Prostate gland (tissue), 2 donors: ENCODE measurements at regions of chr1 and their contacts with region 1.

Region 1: GRCh38 chr1:116570358-116571200 is at the start of gene CD58:
- DNase-seq: peak; percentile 85
- H3K4me3 ChIP-seq: peak within 1 kb of the TSS; percentile 63 to 97
- H3K27ac ChIP-seq: peak within 1 kb of the TSS; percentile 94 to 97
- H3K4me1 ChIP-seq: no peaks in the 10 kb centered on the region
- H3K27me3 ChIP-seq: no peaks in the 10 kb centered on the region
- CTCF ChIP-seq: peak in 3 of 4 experiments; percentile 39 to 73 (median 70)
- POLR2A ChIP-seq: peak; percentile 82
- total RNA-seq, gene CD58: 10.4 to 13.7 TPM

Region 2: GRCh38 chr1:116529199-116529616 is 41.4 kb before region 1 on chr1:
- intact Hi-C with region 1: no loop called
- DNase-seq: no peak
- H3K4me3 ChIP-seq: no peak overlapping the region
- H3K27ac ChIP-seq: no peak overlapping the region
- H3K4me1 ChIP-seq: no peaks in the 10 kb centered on the region
- H3K27me3 ChIP-seq: no peaks in the 10 kb centered on the region
- CTCF ChIP-seq: no peak
- POLR2A ChIP-seq: no peak

Region 3: GRCh38 chr1:116667575-116668105 is 97.1 kb after region 1 on chr1 and contains the start of gene IGSF3:
- intact Hi-C with region 1: loop called (anchors 5 kb)
- DNase-seq: peak; percentile 67
- H3K4me3 ChIP-seq: peak within 1 kb of the TSS; percentile 71 to 77
- H3K27ac ChIP-seq: peak within 1 kb of the TSS; percentile 62 to 66
- H3K4me1 ChIP-seq: no peaks in the 10 kb centered on the region
- H3K27me3 ChIP-seq: no peaks in the 10 kb centered on the region
- CTCF ChIP-seq: no peak
- POLR2A ChIP-seq: peak; percentile 60
- total RNA-seq, gene IGSF3: 23.2 to 30.4 TPM

Region 4: DNA sequence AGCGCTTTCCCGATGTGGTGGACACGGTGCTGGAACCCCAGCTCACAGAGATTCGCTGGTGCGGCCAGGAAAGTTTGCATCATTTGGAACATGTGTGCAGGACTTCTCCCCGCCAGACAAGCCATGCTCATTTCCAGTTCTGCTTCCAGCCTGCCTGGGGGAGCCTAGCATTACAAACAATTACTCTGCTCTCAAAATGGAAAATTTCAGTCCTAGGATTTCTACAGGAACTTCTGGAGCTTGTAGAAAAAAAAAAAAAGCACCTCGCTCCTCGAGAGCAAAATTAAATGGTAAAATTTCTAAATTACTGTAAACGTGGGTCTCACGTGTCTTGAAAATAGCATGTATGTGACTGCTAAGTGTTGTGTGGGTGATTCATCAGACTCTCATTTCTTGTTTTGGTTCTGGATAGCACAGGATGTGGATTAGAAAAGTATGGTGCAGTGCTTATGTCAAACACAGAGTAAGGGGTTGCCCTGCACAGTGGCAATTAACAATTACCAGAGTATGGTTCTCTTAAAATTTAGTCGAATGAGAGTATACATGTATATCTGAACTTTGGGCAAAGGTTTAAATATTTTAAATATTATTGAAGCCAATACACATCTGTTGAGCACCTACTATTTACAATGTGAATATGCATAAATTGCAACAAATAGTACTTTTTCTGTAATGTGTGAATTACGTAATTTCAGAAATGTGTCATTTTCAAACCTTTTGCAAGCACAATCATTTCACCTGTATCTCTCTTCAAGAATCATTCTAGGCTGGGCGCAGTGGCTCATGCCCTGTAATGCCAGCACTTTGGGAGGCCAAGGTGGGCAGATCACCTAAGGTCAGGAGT is 277.3 kb after region 1 on chr1:
- intact Hi-C with region 1: no loop called
- DNase-seq: no peak
- H3K4me3 ChIP-seq: no peak overlapping the region
- H3K27ac ChIP-seq: no peak overlapping the region
- H3K4me1 ChIP-seq: no peaks in the 10 kb centered on the region
- H3K27me3 ChIP-seq: no peaks in the 10 kb centered on the region
- CTCF ChIP-seq: no peak
- POLR2A ChIP-seq: no peak

Region 5: DNA sequence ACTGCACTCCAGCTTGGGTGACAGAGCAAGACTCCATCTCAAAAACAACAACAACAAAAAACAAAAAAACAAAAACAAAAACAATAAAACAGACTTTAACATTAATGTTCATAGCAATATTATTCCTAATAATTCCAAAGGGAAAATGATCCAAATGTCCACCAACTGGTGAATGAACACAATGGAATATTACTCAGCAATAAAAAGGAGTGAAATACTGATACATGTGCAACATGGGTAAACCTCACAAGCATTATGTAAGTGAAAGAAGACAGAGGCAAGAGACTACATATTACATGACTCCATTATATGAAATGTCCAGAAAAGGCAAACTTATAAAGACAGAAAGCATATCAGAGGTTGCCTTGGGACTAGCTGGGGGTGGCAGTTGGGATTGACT is 483.5 kb after region 1 on chr1:
- intact Hi-C with region 1: loop called (anchors 2 kb)
- DNase-seq: no peak
- H3K4me3 ChIP-seq: no peak overlapping the region
- H3K27ac ChIP-seq: no peak overlapping the region
- H3K4me1 ChIP-seq: no peaks in the 10 kb centered on the region
- H3K27me3 ChIP-seq: no peaks in the 10 kb centered on the region
- CTCF ChIP-seq: no peak
- POLR2A ChIP-seq: no peak